Dorsolateral prefrontal cortex (tissue), 120 donors: ENCODE measurements at regions of chr5 and their contacts with region 1.

Region 1: GRCh38 chr5:39283231-39283818 is 64.0 kb upstream of the FYB1 start:
- DNase-seq: no peak
- H3K4me3 ChIP-seq: no peak overlapping the region
- H3K27ac ChIP-seq: no peak overlapping the region
- H3K27me3 ChIP-seq: peaks cover 0 to 8% (median 0%) of the 10 kb centered on the region in 45 donors
- CTCF ChIP-seq: peak in 55 of 56 donors; percentile 33 to 81 (median 65)

Region 2: GRCh38 chr5:38831909-38832308 is 451.4 kb before region 1 on chr5:
- intact Hi-C with region 1: loop called in 1 of 2 experiments (anchors 10 kb)
- DNase-seq: no peak
- H3K4me3 ChIP-seq: no peak overlapping the region
- H3K27ac ChIP-seq: no peak overlapping the region
- H3K27me3 ChIP-seq: no peaks in the 10 kb centered on the region
- CTCF ChIP-seq: peak in 51 of 56 donors; percentile 14 to 61 (median 40)

Region 3: DNA sequence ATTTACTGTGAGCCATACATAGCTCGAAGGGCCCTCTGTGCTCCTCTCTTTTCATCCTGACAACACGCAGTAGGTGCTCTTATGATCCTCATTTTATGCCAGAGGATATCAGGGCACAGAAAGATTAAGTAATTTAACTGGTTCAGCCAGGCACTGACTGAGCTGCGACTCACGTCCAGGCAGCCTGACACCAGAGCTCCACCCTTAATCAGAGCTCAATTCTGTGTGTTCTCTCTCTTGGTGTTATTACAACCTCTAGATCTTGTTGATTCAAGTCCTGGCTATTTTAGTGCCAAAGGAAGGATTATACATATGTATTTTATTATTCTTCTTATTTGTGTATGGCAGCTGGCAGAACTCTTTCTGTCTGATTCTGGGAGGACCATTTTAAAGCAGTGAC is 377.8 kb before region 1 on chr5:
- intact Hi-C with region 1: no loop called
- DNase-seq: no peak
- H3K4me3 ChIP-seq: no peak overlapping the region
- H3K27ac ChIP-seq: no peak overlapping the region
- H3K27me3 ChIP-seq: peaks cover 0 to 3% (median 0%) of the 10 kb centered on the region in 45 donors
- CTCF ChIP-seq: no peak

Region 4: GRCh38 chr5:39148983-39149534 is 134.3 kb before region 1 on chr5:
- intact Hi-C with region 1: loop called (anchors 5 to 10 kb)
- DNase-seq: no peak
- H3K4me3 ChIP-seq: no peak overlapping the region
- H3K27ac ChIP-seq: peak overlapping the region in 33 of 59 donors; percentile 1 to 78 (median 39)
- H3K27me3 ChIP-seq: peaks cover 0 to 5% (median 0%) of the 10 kb centered on the region in 45 donors
- CTCF ChIP-seq: peak in 55 of 56 donors; percentile 39 to 79 (median 59)

Region 5: DNA sequence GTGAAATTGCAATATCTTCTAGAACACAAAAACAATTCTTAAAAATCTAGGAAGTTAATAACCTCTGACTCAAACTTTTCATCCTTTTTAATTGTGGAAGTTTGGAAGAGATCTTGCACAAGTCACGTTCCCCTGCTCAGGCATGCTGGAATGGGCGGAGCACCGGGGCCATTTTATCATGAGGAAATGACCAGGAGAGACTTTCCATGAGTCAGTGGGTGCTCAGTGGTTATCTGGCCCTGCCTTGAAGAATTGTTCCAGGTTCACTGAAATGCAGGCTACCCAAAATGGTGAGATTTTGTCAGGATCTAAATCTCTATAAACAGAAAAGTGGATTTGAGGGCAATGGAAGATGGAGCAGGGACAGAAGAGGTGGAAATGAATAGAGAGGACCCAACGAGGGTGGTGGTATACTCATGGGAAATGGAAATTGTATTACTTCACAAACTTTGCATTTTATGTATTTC is 125.2 kb before region 1 on chr5:
- intact Hi-C with region 1: loop called in 1 of 2 experiments (anchors 10 kb)
- DNase-seq: no peak
- H3K4me3 ChIP-seq: no peak overlapping the region
- H3K27ac ChIP-seq: no peak overlapping the region
- H3K27me3 ChIP-seq: peaks cover 0 to 10% (median 0%) of the 10 kb centered on the region in 45 donors
- CTCF ChIP-seq: no peak

Region 6: GRCh38 chr5:39217365-39218281 is 65.7 kb before region 1 on chr5:
- intact Hi-C with region 1: loop called (anchors 5 kb)
- DNase-seq: peak in 9 of 10 donors; percentile 38 to 81 (median 58)
- H3K4me3 ChIP-seq: peak overlapping the region in 42 of 59 donors; percentile 0 to 52 (median 28)
- H3K27ac ChIP-seq: peak overlapping the region in 24 of 59 donors; percentile 1 to 80 (median 44)
- H3K27me3 ChIP-seq: no peaks in the 10 kb centered on the region
- CTCF ChIP-seq: peak; percentile 81 to 97 (median 93)